Activated naive CD4-positive, alpha-beta T cell treated with anti-CD3 and anti-CD28 coated beads for 36 hours (primary cell): ENCODE measurements at regions of chr12 and their contacts with region 1.

Region 1: DNA sequence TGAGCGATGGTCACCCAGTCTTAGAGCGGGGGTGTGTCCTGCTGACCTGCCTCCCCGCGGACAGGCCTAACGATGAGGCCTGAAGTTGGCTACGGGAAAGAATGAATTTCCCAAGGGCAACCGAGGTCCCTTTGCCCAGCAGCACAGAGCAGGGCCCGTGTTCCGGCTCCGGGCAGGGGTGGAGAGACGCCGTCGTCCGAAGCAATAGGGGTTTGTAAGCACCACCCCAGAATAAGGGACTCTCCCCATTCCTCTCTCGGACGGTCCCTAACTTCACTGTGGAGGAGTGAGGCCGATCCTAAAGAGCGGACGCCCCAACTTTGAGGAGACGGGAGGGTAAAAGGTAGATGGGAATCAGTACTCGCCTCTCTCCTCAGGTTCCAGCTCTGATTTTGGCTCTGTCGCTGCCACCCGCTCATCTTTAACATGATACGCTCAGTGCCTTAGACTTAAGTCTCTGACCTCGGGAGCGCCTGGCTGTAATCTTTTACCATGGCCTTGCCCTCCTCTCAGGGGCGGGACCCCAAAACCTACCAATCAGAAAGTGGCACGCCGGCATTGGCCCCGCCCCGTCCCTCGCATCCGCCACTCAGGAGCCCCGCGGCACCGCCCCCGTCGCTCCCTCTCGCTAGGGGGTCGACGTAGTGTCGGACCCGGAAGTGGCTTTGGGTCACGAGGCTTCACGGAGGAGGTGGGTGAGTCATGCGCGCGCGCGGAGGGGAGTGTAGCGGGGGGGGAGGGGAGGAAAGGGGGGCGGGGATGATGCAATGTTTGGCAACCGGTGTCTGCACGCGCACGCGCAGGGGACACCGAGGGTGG is at the start of gene DDIT3:
- DNase-seq: peak; percentile 100
- H3K4me3 Mint-ChIP-seq: peak within 1 kb of the TSS; percentile 97
- H3K27ac Mint-ChIP-seq: peak within 1 kb of the TSS; percentile 100
- H3K4me1 Mint-ChIP-seq: peaks cover 67% of the 10 kb centered on the region
- H3K27me3 Mint-ChIP-seq: no peaks in the 10 kb centered on the region
- total RNA-seq, gene DDIT3: 44.6 to 45.6 TPM

Region 2: DNA sequence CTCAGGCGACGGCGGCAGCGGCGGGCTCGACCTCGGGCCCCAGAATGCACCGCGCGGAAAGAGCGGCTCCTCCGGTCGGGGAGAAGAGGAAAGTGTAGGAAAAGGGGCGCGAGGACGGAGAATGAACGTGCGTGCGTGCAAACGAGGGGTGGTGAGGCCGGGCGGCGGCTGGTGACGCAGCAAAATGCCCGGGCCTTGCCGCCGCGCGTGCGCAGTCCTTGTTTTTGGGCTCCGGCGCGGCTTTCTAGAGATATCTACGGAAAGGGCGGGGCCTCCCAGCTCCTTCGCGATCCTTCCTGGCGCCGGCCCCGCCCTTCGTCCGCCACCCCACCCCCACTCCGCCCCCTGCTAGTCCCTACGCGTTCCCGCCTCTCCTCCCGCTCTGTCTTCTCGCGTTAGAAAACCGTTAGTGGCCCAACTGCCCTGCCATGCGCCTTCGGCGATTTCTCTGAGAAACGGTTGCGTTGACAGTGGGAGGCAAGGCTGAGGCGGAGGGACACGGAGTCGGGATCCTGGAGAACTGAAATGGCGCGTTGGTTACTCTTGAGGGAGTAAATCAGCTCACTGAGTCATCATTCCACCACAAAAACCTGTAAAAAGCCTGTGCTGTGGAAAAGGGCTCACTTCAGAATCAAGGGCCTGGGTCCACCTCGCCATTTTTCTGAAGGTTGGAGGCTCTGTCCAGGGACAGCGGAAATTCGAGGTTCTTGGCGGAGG is 832.0 kb before region 1 on chr12 and contains the start of gene PTGES3:
- CTCF ChIA-PET with region 1: no interaction called
- intact Hi-C with region 1: loop called (anchors 5 kb)
- DNase-seq: peak; percentile 99
- H3K4me3 Mint-ChIP-seq: peak within 1 kb of the TSS; percentile 90
- H3K27ac Mint-ChIP-seq: peak within 1 kb of the TSS; percentile 99
- H3K4me1 Mint-ChIP-seq: peaks cover 19% of the 10 kb centered on the region
- H3K27me3 Mint-ChIP-seq: no peaks in the 10 kb centered on the region
- total RNA-seq, gene PTGES3: 289 to 293 TPM

Region 3: GRCh38 chr12:57280211-57281062 is 239.8 kb before region 1 on chr12:
- CTCF ChIA-PET with region 1: no interaction called
- intact Hi-C with region 1: loop called (anchors 1 kb)
- DNase-seq: peak; percentile 90
- H3K4me3 Mint-ChIP-seq: peak overlapping the region; percentile 46
- H3K27ac Mint-ChIP-seq: peak overlapping the region; percentile 90
- H3K4me1 Mint-ChIP-seq: peaks cover 28% of the 10 kb centered on the region
- H3K27me3 Mint-ChIP-seq: no peaks in the 10 kb centered on the region

Region 4: GRCh38 chr12:57487597-57488401 is 32.5 kb before region 1 on chr12 and contains the start of gene MARS1:
- CTCF ChIA-PET with region 1: no interaction called
- intact Hi-C with region 1: loop called (anchors 1 kb)
- DNase-seq: peak; percentile 97
- H3K4me3 Mint-ChIP-seq: peak within 1 kb of the TSS; percentile 97
- H3K27ac Mint-ChIP-seq: peak within 1 kb of the TSS; percentile 94
- H3K4me1 Mint-ChIP-seq: peaks cover 49% of the 10 kb centered on the region
- H3K27me3 Mint-ChIP-seq: no peaks in the 10 kb centered on the region
- total RNA-seq, gene MARS1: 481 to 489 TPM

Region 5: DNA sequence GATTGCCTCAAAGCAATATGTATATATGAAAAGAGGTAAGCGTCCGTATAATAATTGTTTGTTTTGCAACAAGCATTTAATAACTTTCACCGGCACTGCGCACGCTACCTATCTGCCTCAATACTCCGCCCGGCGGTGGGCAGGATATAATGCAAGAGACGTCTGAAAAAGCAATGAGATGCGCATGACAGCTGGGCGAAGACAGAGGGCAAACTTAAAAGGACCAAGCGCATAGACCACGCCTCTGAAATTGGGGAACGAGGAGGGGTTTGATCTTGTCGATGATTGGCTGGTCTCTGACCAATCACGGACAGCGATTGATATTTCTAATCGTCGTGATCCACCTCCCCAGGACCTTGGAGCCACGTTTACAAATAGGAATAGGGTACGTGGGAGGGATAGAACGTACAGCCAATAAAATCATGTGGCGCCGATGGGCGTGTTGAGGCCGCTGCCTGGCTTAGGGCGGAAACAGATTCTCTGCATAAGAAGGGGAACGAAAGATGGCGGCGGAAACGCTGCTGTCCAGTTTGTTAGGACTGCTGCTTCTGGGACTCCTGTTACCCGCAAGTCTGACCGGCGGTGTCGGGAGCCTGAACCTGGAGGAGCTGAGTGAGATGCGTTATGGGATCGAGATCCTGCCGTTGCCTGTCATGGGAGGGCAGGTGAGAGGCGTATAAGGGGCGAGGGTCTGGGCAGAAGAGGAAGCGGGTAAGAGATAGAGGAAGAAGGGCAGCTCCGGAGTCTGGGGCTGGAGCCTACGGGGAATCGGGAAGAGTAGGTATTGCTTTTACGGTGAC is 173.6 kb after region 1 on chr12 and contains the start of gene OS9:
- CTCF ChIA-PET with region 1: interaction called, 6 read pairs
- intact Hi-C with region 1: loop called (anchors 1 kb)
- DNase-seq: peak; percentile 99
- H3K4me3 Mint-ChIP-seq: no peak within 1 kb of the TSS
- H3K27ac Mint-ChIP-seq: no peak within 1 kb of the TSS
- H3K4me1 Mint-ChIP-seq: peaks cover 3% of the 10 kb centered on the region
- H3K27me3 Mint-ChIP-seq: no peaks in the 10 kb centered on the region
- total RNA-seq, gene OS9: 60.7 to 60.9 TPM

Region 6: GRCh38 chr12:57846577-57847319 is 326.5 kb after region 1 on chr12 and contains the start of gene CTDSP2:
- CTCF ChIA-PET with region 1: no interaction called
- intact Hi-C with region 1: loop called (anchors 2 kb)
- DNase-seq: peak; percentile 93
- H3K4me3 Mint-ChIP-seq: peak within 1 kb of the TSS; percentile 88
- H3K27ac Mint-ChIP-seq: peak within 1 kb of the TSS; percentile 92
- H3K4me1 Mint-ChIP-seq: peaks cover 44% of the 10 kb centered on the region
- H3K27me3 Mint-ChIP-seq: peaks cover 7% of the 10 kb centered on the region
- total RNA-seq, gene CTDSP2: 94.6 to 99.8 TPM

Region 7: DNA sequence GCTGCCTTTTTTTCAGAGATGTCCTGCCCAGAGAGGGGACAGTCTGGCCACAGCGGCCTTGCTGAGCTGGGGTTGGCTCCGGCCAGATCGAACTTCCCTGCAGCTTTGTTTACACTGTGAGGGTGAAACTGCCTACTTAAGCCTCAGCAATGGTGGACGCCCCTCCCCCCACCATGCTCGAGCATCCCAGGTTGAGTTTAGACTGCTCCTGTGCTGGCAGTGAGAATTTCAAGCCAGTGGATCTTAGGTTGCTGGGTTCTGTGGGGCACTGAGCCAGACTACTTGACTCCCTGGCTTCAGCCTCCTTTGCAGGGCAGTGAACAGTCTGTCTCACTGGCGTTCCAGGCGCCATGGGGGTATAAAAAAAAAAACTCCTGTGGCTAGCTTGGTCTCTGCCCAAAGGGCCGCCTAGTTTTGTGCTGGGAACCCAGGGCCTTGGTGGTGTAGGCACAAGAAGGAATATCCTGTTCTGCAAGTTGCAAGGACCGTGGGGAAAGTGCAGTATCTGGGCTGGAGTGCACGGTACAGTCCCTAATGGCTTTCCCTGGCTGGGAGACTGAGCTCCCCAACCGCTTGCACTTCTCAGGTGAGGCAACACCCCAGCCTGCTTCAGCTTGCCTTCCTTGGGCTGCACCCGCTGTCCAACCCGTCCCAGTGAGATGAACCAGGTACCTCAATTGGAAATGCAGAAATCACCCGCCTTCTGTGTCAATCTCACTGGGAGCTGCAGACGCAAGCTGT is 1321.0 kb after region 1 on chr12:
- CTCF ChIA-PET with region 1: no interaction called
- intact Hi-C with region 1: no loop called
- DNase-seq: no peak
- H3K4me3 Mint-ChIP-seq: no peak overlapping the region
- H3K27ac Mint-ChIP-seq: no peak overlapping the region
- H3K4me1 Mint-ChIP-seq: no peaks in the 10 kb centered on the region
- H3K27me3 Mint-ChIP-seq: no peaks in the 10 kb centered on the region